MCF 10A (cell line): ENCODE measurements at regions of chr9 and their contacts with region 1.

Region 1: DNA sequence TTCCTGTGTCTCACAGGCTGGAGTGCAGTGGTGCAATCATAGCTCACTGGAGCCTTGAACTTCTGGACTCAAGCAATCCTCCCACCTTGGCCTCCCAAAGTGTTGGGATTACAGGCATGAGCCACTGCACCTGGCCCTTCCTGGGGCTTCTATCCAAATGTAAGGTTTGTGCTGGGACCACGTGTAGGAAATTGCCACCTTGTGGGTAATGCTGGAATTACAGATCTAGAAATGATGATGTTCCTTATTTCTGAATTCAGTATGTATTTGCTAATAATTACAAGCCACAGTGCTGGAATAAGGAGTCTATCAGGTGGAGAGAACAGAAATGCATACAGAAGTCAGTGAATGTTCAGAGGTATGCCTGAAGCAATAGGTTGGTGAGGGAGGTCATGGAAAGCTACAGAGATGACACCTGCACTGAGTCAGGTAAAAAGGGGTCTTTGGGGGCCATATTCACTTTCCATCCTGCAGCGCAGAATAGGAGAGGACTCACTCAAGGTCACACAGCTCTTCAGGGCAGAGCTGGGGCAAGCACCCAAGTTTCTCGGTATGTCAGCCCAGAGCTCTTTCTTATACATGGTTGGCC is 8.8 kb upstream of the IGFBPL1 start:
- DNase-seq: peak; percentile 49
- H3K4me3 Mint-ChIP-seq: no peak overlapping the region
- H3K27ac Mint-ChIP-seq: no peak overlapping the region
- H3K4me1 Mint-ChIP-seq: no peaks in the 10 kb centered on the region
- H3K27me3 Mint-ChIP-seq: peaks cover 5% of the 10 kb centered on the region
- CTCF ChIP-seq: peak; percentile 43

Region 2: DNA sequence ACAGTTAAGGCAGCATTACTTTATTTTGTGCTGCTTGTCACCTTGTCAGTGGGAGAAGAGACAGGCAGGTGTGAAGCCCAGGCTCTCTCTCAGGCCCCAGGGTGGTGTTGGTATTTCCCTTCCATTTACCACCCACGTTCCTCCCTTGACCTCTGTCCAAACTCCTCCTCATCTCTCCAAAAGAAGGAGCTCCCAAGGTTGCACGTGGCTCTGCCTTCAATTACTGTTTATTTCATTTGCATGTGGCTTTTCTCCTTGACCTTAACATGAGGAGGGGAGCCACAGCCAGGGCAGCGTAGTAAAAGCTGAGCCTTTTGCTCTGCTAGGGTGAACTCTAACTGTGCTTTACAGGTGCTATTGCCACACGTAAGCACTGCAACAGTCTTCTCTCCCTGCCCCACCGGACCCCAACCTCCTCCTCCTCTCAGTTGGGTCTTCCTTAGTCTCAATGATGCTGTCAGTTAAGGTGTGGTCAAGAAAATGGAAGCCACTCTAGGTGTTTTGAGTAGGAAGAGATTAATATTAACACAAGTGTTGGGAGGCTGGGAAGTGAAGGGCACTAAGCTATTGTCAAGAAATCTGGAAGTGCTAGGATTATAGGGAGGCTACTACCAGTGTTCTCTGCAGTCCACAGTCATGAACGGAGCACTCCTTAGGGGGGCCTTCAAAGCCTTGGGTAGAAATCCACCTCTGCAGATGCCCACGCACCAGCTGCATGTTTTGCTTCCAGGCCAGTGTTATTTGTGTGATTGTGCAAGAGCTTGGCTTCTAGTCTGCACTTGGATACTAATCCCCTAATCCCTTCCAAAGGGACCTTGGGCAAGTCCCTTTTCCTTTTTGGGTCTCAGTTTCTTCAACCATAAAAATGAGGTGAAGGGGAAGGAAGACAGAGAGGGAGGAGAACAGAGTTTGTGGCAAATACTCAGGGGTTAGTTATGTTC is 44.5 kb before region 1 on chr9:
- CTCF ChIA-PET with region 1: interaction called, 10 read pairs
- POLR2A ChIA-PET with region 1: no interaction called
- intact Hi-C with region 1: no loop called
- DNase-seq: peak; percentile 48
- H3K4me3 Mint-ChIP-seq: no peak overlapping the region
- H3K27ac Mint-ChIP-seq: no peak overlapping the region
- H3K4me1 Mint-ChIP-seq: peaks cover 13% of the 10 kb centered on the region
- H3K27me3 Mint-ChIP-seq: no peaks in the 10 kb centered on the region
- CTCF ChIP-seq: no peak

Region 3: DNA sequence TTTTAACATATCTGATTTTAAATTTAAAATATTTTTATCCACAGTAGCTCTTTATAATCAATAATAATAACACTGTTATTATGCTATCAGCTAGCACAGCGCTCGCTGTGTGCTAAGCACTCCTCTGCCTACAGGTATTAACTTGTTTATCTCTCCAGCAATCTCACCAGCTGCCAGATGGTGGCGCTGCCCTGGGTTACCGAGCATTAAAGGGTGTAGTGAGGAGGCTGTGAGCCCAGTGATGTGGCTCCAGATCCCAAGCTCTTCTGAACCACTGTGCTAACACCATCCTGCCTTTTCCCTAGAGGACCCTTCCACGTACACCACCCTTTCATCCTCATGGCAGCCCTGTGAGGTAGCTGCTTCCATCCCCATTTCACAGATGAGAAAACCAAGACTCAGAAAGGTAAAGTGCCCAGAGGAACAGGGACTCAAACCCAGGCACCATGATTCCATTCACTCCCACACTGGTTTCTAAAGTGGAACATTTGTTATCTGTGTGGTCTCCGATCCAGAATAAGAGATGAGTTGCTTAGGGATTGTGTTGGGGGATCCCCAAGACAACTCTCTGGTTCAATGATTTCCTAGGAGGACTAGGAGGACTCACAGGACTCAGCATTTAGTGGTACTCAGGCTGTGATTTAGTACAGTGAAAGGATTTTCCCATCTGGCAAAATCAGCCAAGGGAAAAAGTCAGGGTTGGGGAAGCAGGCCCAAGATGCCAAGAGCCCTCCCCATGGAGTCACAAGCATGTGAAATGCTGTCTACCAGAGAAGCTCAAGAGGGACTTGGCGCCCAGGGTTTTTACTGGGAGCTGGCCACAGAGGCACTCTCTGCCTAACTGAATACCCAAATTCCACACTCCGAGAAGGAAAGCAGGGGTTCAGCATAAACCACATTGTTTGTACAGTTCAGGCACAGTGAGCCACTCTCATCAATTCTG is 15.7 kb before region 1 on chr9:
- CTCF ChIA-PET with region 1: interaction called, 37 read pairs
- POLR2A ChIA-PET with region 1: no interaction called
- intact Hi-C with region 1: no loop called
- DNase-seq: peak; percentile 43
- H3K4me3 Mint-ChIP-seq: no peak overlapping the region
- H3K27ac Mint-ChIP-seq: no peak overlapping the region
- H3K4me1 Mint-ChIP-seq: no peaks in the 10 kb centered on the region
- H3K27me3 Mint-ChIP-seq: peaks cover 25% of the 10 kb centered on the region
- CTCF ChIP-seq: peak; percentile 54

Region 4: DNA sequence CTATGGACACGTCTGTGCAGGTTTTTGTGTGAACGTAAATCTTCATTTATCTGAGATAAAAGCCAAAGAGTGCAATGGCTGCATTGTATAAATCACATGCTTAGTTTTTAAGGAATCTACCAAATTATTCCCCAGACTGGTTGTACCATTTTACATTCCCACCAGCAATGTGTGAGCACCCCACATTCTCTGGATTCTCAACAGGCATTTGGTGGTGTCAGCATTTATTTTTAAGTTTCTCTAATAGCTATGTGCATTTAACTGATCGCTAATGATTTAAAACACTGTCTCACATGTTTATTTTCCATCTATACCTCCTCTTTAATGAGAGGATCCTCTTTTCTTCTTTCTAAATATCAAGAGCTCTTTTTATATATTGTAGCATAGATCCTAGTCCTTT is 201.3 kb after region 1 on chr9:
- CTCF ChIA-PET with region 1: no interaction called
- POLR2A ChIA-PET with region 1: no interaction called
- intact Hi-C with region 1: no loop called
- DNase-seq: no peak
- H3K4me3 Mint-ChIP-seq: no peak overlapping the region
- H3K27ac Mint-ChIP-seq: no peak overlapping the region
- H3K4me1 Mint-ChIP-seq: no peaks in the 10 kb centered on the region
- H3K27me3 Mint-ChIP-seq: no peaks in the 10 kb centered on the region
- CTCF ChIP-seq: no peak